ENCODE measurements at regions of chrX and their contacts with region 1.

Region 1: GRCh38 chrX:137441711-137442110 is 124.2 kb upstream of the ZIC3 start:
- DNase-seq: no peak
- ATAC-seq: no peak
- H3K4me3 ChIP-seq: no peak overlapping the region
- H3K27ac ChIP-seq: no peak overlapping the region
- H3K4me1 ChIP-seq: no peaks in the 10 kb centered on the region
- H3K27me3 ChIP-seq: no peaks in the 10 kb centered on the region
- CTCF ChIP-seq: no peak

Region 2: GRCh38 chrX:138026211-138026610 is 584.5 kb after region 1 on chrX:
- CTCF ChIA-PET with region 1: no interaction called
- POLR2A ChIA-PET with region 1: no interaction called
- in situ Hi-C with region 1: no loop called
- intact Hi-C with region 1: loop called (anchors 10 kb)
- DNase-seq: no peak
- ATAC-seq: peak; percentile 53; the same call in 1 of the 2 replicates
- H3K4me3 ChIP-seq: no peak overlapping the region
- H3K27ac ChIP-seq: no peak overlapping the region
- H3K4me1 ChIP-seq: no peaks in the 10 kb centered on the region
- H3K27me3 ChIP-seq: no peaks in the 10 kb centered on the region
- CTCF ChIP-seq: peak; percentile 62

Measured in Panc1 (cell line).